MCF 10A (cell line): ENCODE measurements at regions of chr4 and their contacts with region 1.

Region 1: GRCh38 chr4:101347557-101348366 is 436 bp upstream of the PPP3CA start:
- DNase-seq: peak; percentile 97
- H3K4me3 Mint-ChIP-seq: peak overlapping the region; percentile 90
- H3K27ac Mint-ChIP-seq: peak overlapping the region; percentile 96
- H3K4me1 Mint-ChIP-seq: peaks cover 33% of the 10 kb centered on the region
- H3K27me3 Mint-ChIP-seq: no peaks in the 10 kb centered on the region
- CTCF ChIP-seq: no peak

Region 2: GRCh38 chr4:100093091-100093866 is 1254.5 kb before region 1 on chr4:
- CTCF ChIA-PET with region 1: interaction called, 3 read pairs
- POLR2A ChIA-PET with region 1: no interaction called
- intact Hi-C with region 1: loop called (anchors 10 kb)
- DNase-seq: peak; percentile 94
- H3K4me3 Mint-ChIP-seq: no peak overlapping the region
- H3K27ac Mint-ChIP-seq: peak overlapping the region; percentile 87
- H3K4me1 Mint-ChIP-seq: peaks cover 19% of the 10 kb centered on the region
- H3K27me3 Mint-ChIP-seq: no peaks in the 10 kb centered on the region
- CTCF ChIP-seq: peak; percentile 66

Region 3: DNA sequence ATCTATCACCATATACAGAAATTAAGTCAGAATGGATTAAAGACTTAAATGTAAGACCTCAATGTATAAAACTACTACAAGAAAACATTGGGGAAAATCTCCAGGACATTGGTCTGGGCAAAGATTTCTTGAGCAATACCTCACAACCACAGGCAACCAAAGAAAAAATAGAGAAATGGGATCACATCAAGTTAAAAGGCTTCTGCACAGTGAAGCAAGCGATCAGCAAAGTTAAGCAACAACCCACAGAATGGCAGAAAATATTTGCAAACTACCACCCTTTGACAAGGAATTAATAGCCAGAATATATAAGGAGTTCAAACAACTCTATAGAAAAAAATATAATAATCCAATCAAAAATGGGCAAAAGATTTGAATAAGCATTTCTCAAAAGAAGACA is 593.0 kb before region 1 on chr4:
- CTCF ChIA-PET with region 1: no interaction called
- POLR2A ChIA-PET with region 1: no interaction called
- intact Hi-C with region 1: no loop called
- DNase-seq: no peak
- H3K4me3 Mint-ChIP-seq: no peak overlapping the region
- H3K27ac Mint-ChIP-seq: no peak overlapping the region
- H3K4me1 Mint-ChIP-seq: no peaks in the 10 kb centered on the region
- H3K27me3 Mint-ChIP-seq: no peaks in the 10 kb centered on the region
- CTCF ChIP-seq: no peak

Region 4: GRCh38 chr4:101020956-101021355 is 326.8 kb before region 1 on chr4:
- CTCF ChIA-PET with region 1: no interaction called
- POLR2A ChIA-PET with region 1: no interaction called
- intact Hi-C with region 1: loop called (anchors 5 kb)
- DNase-seq: peak; percentile 84
- H3K4me3 Mint-ChIP-seq: peak overlapping the region; percentile 17
- H3K27ac Mint-ChIP-seq: peak overlapping the region; percentile 96
- H3K4me1 Mint-ChIP-seq: peaks cover 33% of the 10 kb centered on the region
- H3K27me3 Mint-ChIP-seq: no peaks in the 10 kb centered on the region
- CTCF ChIP-seq: no peak

Region 5: GRCh38 chr4:101200561-101200960 is 147.2 kb before region 1 on chr4:
- CTCF ChIA-PET with region 1: no interaction called
- POLR2A ChIA-PET with region 1: interaction called, 49 read pairs
- intact Hi-C with region 1: loop called (anchors 5 kb)
- DNase-seq: peak; percentile 90
- H3K4me3 Mint-ChIP-seq: peak overlapping the region; percentile 52
- H3K27ac Mint-ChIP-seq: peak overlapping the region; percentile 81
- H3K4me1 Mint-ChIP-seq: peaks cover 28% of the 10 kb centered on the region
- H3K27me3 Mint-ChIP-seq: no peaks in the 10 kb centered on the region
- CTCF ChIP-seq: no peak

Region 6: DNA sequence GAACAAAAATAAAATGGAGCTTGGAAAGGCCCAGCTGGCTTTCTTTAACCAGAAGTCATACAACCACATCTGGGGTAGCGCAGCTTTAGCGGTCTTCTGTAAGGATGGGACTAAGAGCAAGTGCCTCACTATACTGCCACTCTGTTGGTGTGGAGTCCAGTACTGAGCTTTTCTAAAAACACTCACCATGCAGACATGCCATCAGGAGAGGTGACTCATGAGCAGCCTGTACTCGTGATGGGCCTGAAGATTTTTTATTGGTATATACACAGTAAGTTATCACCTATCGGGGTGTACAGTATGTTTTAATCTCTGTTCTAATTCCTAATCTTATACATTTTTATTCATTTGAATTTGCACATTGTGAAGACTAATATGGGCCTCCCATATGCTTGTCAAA is 10.1 kb before region 1 on chr4:
- CTCF ChIA-PET with region 1: interaction called, 5 read pairs
- POLR2A ChIA-PET with region 1: interaction called, 29 read pairs
- intact Hi-C with region 1: no loop called
- DNase-seq: peak; percentile 20
- H3K4me3 Mint-ChIP-seq: no peak overlapping the region
- H3K27ac Mint-ChIP-seq: peak overlapping the region; percentile 40
- H3K4me1 Mint-ChIP-seq: peaks cover 23% of the 10 kb centered on the region
- H3K27me3 Mint-ChIP-seq: no peaks in the 10 kb centered on the region
- CTCF ChIP-seq: no peak

Region 7: DNA sequence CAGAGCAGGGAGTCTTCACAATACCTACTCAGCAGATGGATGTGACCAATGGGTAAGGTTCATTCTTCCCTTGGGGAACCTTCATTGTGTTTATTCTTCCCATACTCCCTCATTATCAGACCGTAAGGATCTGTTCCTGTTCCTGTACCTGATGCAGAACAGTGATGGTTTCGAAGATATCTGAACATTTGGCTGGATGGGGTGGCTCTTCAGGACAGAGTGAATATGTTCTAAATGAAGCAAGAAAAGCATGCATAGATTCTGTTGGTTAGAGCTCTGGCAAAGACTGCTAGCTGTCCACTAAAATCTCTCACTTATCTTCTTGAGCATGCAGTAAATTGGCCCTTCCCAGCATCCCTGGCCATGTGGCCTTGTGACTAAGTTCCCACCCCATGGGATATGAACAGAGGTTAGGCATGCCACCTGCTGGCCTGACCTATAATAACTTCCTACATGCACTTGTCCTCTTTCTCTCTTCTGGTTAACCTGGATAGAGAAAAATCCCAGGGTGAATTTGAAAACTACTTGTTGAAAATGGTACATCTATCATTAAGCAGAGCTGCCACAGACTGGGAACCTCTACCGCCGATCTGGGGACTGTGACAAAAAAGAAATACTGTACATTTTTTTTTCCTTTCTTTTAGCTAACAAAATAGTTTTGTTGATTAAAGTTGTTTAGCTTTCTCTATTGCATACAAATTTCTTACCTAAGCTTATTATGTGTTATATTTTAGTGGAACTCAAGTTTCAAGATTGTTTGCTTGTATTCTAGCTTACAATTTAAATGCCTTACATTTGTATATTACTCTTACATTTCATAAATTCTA is 382.7 kb after region 1 on chr4:
- CTCF ChIA-PET with region 1: interaction called, 5 read pairs
- POLR2A ChIA-PET with region 1: interaction called, 13 read pairs
- intact Hi-C with region 1: loop called (anchors 1 kb)
- DNase-seq: peak; percentile 77
- H3K4me3 Mint-ChIP-seq: no peak overlapping the region
- H3K27ac Mint-ChIP-seq: no peak overlapping the region
- H3K4me1 Mint-ChIP-seq: no peaks in the 10 kb centered on the region
- H3K27me3 Mint-ChIP-seq: no peaks in the 10 kb centered on the region
- CTCF ChIP-seq: peak; percentile 57

Region 8: GRCh38 chr4:101753721-101754120 is 406.0 kb after region 1 on chr4:
- CTCF ChIA-PET with region 1: no interaction called
- POLR2A ChIA-PET with region 1: no interaction called
- intact Hi-C with region 1: no loop called
- DNase-seq: no peak
- H3K4me3 Mint-ChIP-seq: no peak overlapping the region
- H3K27ac Mint-ChIP-seq: no peak overlapping the region
- H3K4me1 Mint-ChIP-seq: no peaks in the 10 kb centered on the region
- H3K27me3 Mint-ChIP-seq: no peaks in the 10 kb centered on the region
- CTCF ChIP-seq: no peak